ENCODE measurements at regions of chr1 and their contacts with region 1.

Region 1: GRCh38 chr1:182781841-182782586 is 7.6 kb upstream of the NPL start:
- DNase-seq: peak; percentile 64 to 85 (median 85)
- ATAC-seq: peak; percentile 63 to 72
- H3K4me3 ChIP-seq: no peak overlapping the region
- H3K27ac ChIP-seq: no peak overlapping the region
- H3K4me1 ChIP-seq: no peaks in the 10 kb centered on the region
- H3K27me3 ChIP-seq: no peaks in the 10 kb centered on the region

Region 2: GRCh38 chr1:182601416-182601786 is 180.6 kb before region 1 on chr1:
- intact Hi-C with region 1: loop called (anchors 1 to 2 kb)
- DNase-seq: peak in 2 of 3 donors; percentile 46 to 70
- ATAC-seq: peak in 1 of 2 donors; percentile 31
- H3K4me3 ChIP-seq: no peak overlapping the region
- H3K27ac ChIP-seq: no peak overlapping the region
- H3K4me1 ChIP-seq: peaks cover 3% of the 10 kb centered on the region
- H3K27me3 ChIP-seq: no peaks in the 10 kb centered on the region